B cell (primary cell): ENCODE measurements at regions of chr9 and their contacts with region 1.

Region 1: DNA sequence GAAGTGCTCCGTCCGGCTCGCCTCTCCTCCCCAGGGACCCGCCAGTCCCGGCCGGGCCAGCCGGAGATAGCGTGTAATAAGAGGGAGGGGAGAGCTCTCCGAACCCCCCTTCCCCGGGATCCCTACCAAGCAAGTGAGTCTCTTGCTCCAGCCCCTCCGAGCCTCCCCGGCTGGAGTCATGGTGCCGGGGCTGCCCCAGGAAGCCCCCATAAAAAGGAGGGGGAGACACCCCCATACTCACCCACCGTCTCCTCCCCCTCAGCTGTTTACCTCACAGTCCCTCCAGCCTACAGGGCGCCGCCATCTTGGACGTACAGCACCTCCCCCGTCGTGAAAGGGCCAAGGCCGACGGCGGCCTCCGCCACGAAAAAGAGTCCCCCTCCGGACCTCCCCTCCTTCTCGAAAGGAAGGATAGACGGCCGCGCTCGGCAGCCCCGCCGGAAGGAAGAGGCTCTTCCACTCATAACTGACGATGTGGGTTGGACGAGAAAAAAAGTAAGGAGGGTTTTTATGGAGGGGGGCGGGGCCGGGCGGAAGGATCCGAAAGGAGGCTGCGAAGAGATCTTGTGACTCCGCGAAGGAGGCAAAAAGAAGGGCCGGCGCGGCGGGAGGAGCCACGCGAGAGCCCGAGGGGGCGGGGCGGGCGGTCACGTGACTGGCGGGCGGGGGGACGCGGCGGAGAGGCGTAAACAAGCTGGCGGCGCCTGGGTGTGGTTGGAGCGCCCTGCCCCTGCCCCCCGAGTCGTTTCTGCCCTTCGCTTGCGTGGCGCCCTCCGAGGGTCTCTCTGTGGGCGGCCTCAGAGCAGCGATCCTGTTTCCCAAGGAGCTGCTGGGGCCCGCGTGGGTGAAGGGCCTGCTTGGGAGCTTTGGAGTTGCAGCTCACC is at the start of gene TSC1:
- DNase-seq: peak; percentile 97
- ATAC-seq: peak; percentile 87
- H3K4me3 ChIP-seq: peak within 1 kb of the TSS; percentile 30 to 100 (median 69)
- H3K4me3 Mint-ChIP-seq: peak within 1 kb of the TSS; percentile 98
- H3K27ac ChIP-seq: peak within 1 kb of the TSS; percentile 99 to 100
- H3K27ac Mint-ChIP-seq: peak within 1 kb of the TSS; percentile 100
- H3K4me1 ChIP-seq: peaks cover 18 to 23% of the 10 kb centered on the region in 2 donors
- H3K4me1 Mint-ChIP-seq: peaks cover 23% of the 10 kb centered on the region
- H3K27me3 ChIP-seq: no peaks in the 10 kb centered on the region
- H3K27me3 Mint-ChIP-seq: no peaks in the 10 kb centered on the region
- CTCF ChIP-seq: no peak
- total RNA-seq, gene TSC1: 102 and 108 TPM in 2 replicates

Region 2: GRCh38 chr9:132079391-132080091 is 865.0 kb before region 1 on chr9 and contains the start of gene MED27:
- CTCF ChIA-PET with region 1: no interaction called
- POLR2A ChIA-PET with region 1: no interaction called
- intact Hi-C with region 1: loop called (anchors 5 kb)
- DNase-seq: peak; percentile 95
- ATAC-seq: peak; percentile 99
- H3K4me3 ChIP-seq: peak within 1 kb of the TSS; percentile 60 to 89 (median 81)
- H3K4me3 Mint-ChIP-seq: peak within 1 kb of the TSS; percentile 96
- H3K27ac ChIP-seq: peak within 1 kb of the TSS; percentile 13 to 80
- H3K27ac Mint-ChIP-seq: peak within 1 kb of the TSS; percentile 94
- H3K4me1 ChIP-seq: peaks cover 15 to 17% of the 10 kb centered on the region in 2 donors
- H3K4me1 Mint-ChIP-seq: peaks cover 28% of the 10 kb centered on the region
- H3K27me3 ChIP-seq: peaks cover 0 to 5% (median 0%) of the 10 kb centered on the region in 4 experiments
- H3K27me3 Mint-ChIP-seq: peaks cover 4% of the 10 kb centered on the region
- CTCF ChIP-seq: no peak
- total RNA-seq, gene MED27: 17.4 and 24.4 TPM in 2 replicates

Region 3: DNA sequence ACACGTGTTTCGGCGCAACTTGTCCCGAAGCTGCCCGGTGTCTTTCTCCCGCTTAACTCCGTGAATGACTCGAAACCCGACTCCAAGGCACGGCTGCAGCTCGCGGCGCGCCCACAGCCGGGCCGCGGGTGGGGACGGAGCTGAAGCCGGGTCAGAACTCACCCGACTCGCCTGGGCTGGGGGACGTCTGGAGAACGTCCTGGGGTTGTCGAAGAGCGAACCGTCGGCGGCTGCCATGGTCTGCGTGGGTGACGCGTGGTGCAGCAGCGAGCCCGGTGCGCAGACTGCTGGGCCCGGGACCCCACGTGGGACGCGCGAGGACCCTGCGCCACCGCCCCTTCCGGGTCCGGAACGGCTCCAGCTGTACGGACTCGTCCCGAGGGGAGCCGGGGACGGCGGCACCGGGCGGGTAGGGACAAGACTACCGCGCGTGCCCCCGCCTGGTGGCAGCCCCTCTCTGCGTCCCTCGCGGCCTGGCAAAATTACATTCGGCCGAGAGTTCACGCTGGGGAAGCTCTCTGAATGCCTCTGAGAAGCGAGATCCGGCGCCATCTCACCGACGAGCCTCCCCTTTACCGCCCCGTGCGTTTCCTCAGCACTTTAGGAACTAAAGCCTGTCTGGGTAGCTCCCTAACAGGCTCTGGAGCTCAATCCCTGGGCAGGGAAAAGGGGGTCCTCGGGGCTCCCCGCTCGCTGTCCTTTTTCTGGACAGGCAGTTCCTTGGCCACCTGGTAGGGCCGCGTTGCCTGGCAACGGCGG is 274.7 kb before region 1 on chr9 and contains the start of gene DDX31:
- CTCF ChIA-PET with region 1: no interaction called
- POLR2A ChIA-PET with region 1: interaction called, 11 read pairs
- intact Hi-C with region 1: no loop called
- DNase-seq: peak; percentile 94
- ATAC-seq: peak; percentile 82
- H3K4me3 ChIP-seq: peak within 1 kb of the TSS; percentile 73 to 100 (median 96)
- H3K4me3 Mint-ChIP-seq: peak within 1 kb of the TSS; percentile 93
- H3K27ac ChIP-seq: peak within 1 kb of the TSS; percentile 86 to 95
- H3K27ac Mint-ChIP-seq: peak within 1 kb of the TSS; percentile 94
- H3K4me1 ChIP-seq: peaks cover 20 to 28% of the 10 kb centered on the region in 2 donors
- H3K4me1 Mint-ChIP-seq: peaks cover 52% of the 10 kb centered on the region
- H3K27me3 ChIP-seq: no peaks in the 10 kb centered on the region
- H3K27me3 Mint-ChIP-seq: no peaks in the 10 kb centered on the region
- CTCF ChIP-seq: no peak
- total RNA-seq, gene DDX31: 22.2 and 22.7 TPM in 2 replicates

Region 4: DNA sequence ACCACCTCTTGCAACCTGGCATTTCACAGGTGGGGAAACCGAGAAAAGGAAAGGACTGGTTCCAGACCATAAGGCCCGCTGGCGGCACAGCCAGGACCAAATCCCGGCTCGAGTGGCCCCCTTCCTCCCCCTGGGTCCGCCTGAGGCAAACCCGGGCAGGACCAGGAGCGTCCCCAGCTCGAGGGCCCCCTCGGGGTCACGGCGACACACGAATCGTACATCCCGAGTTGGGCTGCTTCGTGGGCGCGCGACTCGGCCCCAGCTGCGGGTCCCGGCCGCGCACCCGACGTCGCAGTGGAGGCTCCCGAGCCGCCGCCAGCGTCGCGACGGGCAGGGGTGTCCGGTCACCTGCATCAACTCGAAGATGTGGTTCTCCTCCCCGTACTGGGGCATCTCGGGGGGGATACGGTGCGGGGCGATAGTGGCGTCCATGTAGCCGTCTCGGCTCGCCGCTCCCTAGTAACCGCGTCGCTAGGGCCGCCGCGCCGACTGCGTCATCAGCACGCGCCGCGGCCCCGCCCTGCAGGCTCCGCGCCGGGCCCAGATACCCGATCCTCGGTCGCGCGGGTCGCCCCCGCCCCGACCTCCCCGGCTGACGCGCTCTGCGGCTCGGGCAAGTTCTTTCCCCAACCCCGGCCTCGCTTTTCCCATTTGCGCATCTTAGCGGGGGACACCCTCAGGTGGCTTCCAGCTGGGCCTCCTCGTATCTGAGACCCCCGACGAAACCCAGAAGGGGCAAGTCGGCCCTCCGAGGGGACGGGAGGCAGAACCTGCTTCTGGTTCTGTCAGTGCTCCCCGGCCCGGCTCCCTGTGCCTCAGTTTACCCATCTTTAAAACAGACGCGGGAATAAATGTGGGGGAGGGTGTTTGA is 66.5 kb before region 1 on chr9 and contains the start of gene AK8:
- CTCF ChIA-PET with region 1: no interaction called
- POLR2A ChIA-PET with region 1: no interaction called
- intact Hi-C with region 1: loop called (anchors 2 kb)
- DNase-seq: peak; percentile 90
- ATAC-seq: peak; percentile 85
- H3K4me3 ChIP-seq: peak within 1 kb of the TSS; percentile 64 to 99 (median 94)
- H3K4me3 Mint-ChIP-seq: peak within 1 kb of the TSS; percentile 89
- H3K27ac ChIP-seq: peak within 1 kb of the TSS; percentile 51 to 81
- H3K27ac Mint-ChIP-seq: peak within 1 kb of the TSS; percentile 91
- H3K4me1 ChIP-seq: peaks cover 16 to 29% of the 10 kb centered on the region in 2 donors
- H3K4me1 Mint-ChIP-seq: peaks cover 24% of the 10 kb centered on the region
- H3K27me3 ChIP-seq: no peaks in the 10 kb centered on the region
- H3K27me3 Mint-ChIP-seq: no peaks in the 10 kb centered on the region
- CTCF ChIP-seq: no peak
- total RNA-seq, gene AK8: 1.9 and 4.4 TPM in 2 replicates

Region 5: GRCh38 chr9:133023117-133023890 is 78.8 kb after region 1 on chr9:
- CTCF ChIA-PET with region 1: interaction called, 10 read pairs
- POLR2A ChIA-PET with region 1: no interaction called
- intact Hi-C with region 1: no loop called
- DNase-seq: no peak
- ATAC-seq: no peak
- H3K4me3 ChIP-seq: no peak overlapping the region
- H3K4me3 Mint-ChIP-seq: no peak overlapping the region
- H3K27ac ChIP-seq: no peak overlapping the region
- H3K27ac Mint-ChIP-seq: no peak overlapping the region
- H3K4me1 ChIP-seq: peaks cover 3 to 5% of the 10 kb centered on the region in 2 donors
- H3K4me1 Mint-ChIP-seq: peaks cover 7% of the 10 kb centered on the region
- H3K27me3 ChIP-seq: no peaks in the 10 kb centered on the region
- H3K27me3 Mint-ChIP-seq: peaks cover 2% of the 10 kb centered on the region
- CTCF ChIP-seq: no peak